Naive thymus-derived CD8-positive, alpha-beta T cell (primary cell): ENCODE measurements at regions of chr12 and their contacts with region 1.

Region 1: DNA sequence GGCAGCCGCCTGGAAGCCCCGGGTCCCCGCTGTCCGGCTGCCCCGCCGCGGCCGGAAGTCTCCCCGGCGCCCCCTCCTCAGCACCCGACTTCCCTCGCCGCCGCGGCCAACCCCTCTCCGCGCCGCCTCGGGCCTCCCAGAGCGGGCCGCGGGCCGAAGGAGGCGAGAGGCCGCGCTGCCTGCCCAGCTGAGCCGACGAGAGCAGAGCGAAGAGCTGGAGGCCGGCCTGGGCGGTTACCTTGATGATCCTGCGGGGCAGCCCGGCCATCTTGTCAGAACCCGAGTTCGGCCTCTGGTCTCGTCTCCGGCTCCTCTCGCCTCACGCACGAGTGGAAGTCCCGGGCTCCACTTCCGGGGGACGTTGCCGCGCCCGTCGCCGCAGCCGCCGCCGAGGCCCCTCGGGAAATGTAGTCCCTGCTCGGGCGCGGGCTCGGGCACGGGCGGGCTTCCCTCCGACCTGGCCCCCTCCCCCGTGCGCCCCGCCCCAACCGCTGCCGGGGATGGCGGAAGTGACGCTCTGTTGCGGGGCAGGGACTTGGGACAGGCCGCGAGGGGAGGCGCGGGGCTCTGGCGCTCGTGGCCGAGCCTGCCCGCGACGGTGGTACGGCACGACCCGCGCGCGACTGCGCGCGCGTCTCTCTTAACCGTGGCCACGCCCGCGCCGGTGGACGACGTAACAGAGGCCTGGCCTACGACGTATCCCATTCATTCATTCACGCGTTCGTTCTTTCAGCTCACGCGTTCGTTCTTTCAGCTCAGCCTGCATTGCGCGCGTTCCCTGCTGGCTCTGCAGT is at the start of gene UBE2N:
- DNase-seq: peak; percentile 95 to 98 (median 96)
- ATAC-seq: peak; percentile 79 to 85
- H3K4me3 Mint-ChIP-seq: peak within 1 kb of the TSS; percentile 90 to 99 (median 96)
- H3K27ac Mint-ChIP-seq: peak within 1 kb of the TSS; percentile 96 to 100 (median 98)
- H3K4me1 Mint-ChIP-seq: peaks cover 38 to 53% (median 50%) of the 10 kb centered on the region in 4 donors
- H3K27me3 Mint-ChIP-seq: no peaks in the 10 kb centered on the region
- polyA plus RNA-seq, gene UBE2N: 117 to 123 (median 118) TPM

Region 2: DNA sequence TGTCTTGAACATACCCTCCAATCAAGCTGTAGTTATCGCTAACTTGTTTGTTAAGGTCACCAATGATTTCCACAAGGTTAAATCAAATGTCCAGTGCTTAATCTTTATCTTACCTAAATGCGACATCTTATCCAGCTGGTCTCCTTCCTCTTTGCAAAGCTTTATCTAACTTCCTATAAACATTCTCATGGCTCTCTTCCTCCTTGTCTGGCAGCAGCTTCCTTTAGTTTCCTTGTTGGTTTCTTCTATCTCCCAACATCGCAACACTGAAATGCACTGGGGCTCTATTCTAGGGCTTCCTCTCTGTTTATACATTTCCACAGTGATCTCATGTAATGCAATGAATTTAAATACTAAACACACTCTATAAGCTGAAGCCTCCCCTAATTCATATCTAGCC is 28.8 kb before region 1 on chr12:
- POLR2A ChIA-PET with region 1: no interaction called
- DNase-seq: no peak
- ATAC-seq: no peak
- H3K4me3 Mint-ChIP-seq: peak overlapping the region in 5 of 10 donors; percentile 3 to 62 (median 20)
- H3K27ac Mint-ChIP-seq: peak overlapping the region in 9 of 10 donors; percentile 1 to 85 (median 65)
- H3K4me1 Mint-ChIP-seq: peaks cover 30 to 71% (median 68%) of the 10 kb centered on the region in 4 donors
- H3K27me3 Mint-ChIP-seq: no peaks in the 10 kb centered on the region

Region 3: DNA sequence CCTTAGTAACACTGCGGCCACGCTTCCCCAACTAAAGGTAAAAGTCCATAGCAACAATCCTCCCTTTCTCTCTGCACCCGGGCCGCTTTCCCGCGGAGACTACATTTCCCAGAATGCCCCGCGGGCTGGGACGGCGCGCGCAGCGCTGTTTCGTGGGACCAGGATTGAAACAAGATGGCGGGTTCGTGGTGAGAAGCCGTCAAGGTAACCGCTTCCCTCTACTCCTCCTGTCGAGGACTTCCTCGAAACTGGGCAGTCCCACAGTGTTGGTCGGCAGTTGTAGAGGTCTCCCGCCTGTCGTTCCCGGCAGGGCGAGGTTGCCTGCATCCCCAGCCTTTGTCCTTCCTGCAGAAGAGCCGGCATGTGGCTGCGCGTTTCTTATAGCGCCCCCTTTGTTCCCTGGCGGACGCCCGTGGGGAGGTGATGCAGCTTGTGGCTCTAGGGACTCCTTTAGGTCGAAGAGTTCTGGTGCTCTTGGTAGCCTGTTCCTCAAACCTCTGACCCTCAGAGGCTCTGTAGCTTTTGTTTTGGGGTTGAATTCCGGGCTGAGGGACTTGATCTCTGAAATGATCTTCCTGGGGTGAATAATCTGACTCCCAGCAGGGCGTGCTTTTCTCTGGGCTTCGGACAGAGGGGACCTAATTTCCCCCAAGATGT is 25.7 kb after region 1 on chr12 and contains the start of gene MRPL42:
- POLR2A ChIA-PET with region 1: interaction called, 19 read pairs
- DNase-seq: peak; percentile 84 to 96 (median 92)
- ATAC-seq: peak; percentile 90 to 94
- H3K4me3 Mint-ChIP-seq: peak within 1 kb of the TSS; percentile 83 to 96 (median 92)
- H3K27ac Mint-ChIP-seq: peak within 1 kb of the TSS; percentile 77 to 98 (median 97)
- H3K4me1 Mint-ChIP-seq: peaks cover 16 to 39% (median 35%) of the 10 kb centered on the region in 4 donors
- H3K27me3 Mint-ChIP-seq: no peaks in the 10 kb centered on the region
- polyA plus RNA-seq, gene MRPL42: 62.4 to 64.6 (median 64.2) TPM